Right ventricle myocardium inferior (tissue), 1 donor: ENCODE measurements at regions of chr3 and their contacts with region 1.

Region 1: DNA sequence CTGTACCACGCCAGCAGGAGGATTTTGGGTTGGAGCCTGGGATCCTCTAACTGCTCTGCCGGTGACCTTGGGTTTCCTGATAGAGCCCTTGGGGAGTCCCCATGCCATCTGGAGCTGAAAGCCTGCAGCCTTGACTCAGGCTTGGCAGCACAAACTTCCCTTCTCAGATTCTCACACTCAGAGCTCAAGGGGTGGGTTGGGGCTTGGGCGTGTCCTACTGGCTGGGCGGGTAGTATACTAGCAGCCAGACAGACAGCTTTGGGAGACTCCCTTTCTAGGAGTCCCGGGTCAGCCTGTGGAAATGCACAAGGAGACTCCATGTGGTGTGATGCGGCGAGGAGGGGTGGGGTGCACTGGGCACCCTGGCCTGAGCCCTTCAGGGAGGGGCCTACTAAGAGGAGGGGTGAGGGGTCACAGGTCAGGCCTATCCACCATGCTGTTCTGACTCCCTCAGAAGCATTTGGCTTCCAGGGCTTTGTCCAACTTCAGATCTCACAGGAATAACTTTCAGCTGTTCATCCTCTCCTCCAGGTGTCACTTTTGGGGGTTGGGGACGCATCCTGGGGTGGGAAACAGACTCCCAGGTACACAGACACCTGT is 21.6 kb upstream of the PLXNA1 start:
- DNase-seq: peak; percentile 90
- ATAC-seq: peak; percentile 86

Region 2: DNA sequence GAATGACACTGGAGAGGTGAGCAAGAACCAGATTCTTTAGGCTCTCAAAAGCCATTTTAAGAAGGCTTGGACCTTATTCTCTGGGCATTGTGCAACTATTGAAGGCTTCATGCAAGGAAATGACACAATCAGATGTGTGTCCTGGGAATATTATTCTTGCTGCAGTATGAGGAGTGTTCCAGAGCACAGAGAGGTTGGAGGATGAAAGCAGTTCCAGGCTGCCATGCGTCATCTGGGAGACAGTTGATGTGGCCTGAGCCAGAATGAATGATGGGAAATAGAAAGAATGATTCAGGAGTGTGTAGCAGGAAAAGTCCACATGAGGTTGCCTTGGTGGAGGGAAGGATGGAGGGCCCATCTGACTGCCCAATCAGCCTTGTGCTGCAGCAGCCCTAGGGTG is 134.2 kb before region 1 on chr3:
- intact Hi-C with region 1: loop called (anchors 5 kb)
- DNase-seq: no peak
- ATAC-seq: peak; percentile 93